OCI-LY7 (cell line): ENCODE measurements at regions of chr18 and their contacts with region 1.

Region 1: DNA sequence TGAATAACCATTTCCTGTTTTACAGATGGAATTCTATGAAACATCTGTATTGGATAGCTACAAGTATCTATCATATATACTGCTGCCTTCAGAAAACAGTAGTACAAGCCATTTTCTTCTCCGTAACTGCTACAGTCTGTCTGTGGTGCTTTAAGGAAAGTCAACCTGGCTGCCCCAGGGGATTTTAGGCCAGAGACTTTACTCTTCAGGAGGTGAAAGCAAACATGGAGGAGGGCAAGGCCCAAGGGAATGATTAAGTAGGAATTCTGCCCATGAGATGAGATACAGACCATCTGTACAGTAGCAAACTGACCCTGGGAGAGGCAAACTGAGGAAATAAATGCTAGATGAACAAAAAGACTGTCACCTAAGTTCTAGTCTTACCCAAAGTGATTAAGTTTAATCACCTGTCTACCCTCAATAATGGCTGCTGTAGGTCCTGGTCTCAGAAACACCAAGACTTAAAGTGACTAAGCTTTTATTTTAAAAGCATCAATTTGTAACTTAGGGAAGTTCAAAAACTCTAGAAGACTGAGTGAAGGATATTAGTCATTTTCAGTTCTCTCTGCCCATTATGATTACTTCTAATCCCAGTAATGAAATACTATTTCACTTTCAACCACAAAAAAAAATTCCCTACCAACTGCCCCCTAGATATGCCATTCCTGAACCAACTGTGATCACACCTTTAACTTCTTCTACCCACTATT is 14.8 kb downstream of the MBD2 start:
- DNase-seq: peak; percentile 32
- H3K4me3 ChIP-seq: peak overlapping the region; percentile 63
- H3K27ac ChIP-seq: peak overlapping the region; percentile 98
- H3K4me1 ChIP-seq: peaks cover 92% of the 10 kb centered on the region
- CTCF ChIP-seq: no peak

Region 2: DNA sequence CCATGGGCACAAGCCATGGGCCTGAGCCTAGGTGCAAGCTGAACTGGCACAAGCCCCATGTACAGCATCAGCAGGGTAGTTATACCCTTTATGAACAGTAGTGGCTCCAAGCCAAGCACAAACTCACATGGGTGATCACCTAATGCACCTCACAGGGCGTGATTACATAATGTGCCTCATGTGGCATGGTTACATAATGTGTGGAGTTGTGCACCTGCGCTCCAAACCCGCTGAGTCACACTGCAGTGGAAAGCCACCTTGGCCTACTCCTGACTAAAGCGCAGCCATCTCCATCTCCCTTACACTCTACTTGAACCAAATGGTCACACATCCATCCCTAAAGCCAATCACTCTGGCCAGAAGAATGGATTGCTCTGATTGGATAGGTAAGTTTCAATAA is 264.9 kb before region 1 on chr18:
- CTCF ChIA-PET with region 1: no interaction called
- POLR2A ChIA-PET with region 1: no interaction called
- intact Hi-C with region 1: no loop called
- DNase-seq: no peak
- H3K4me3 ChIP-seq: no peak overlapping the region
- H3K27ac ChIP-seq: no peak overlapping the region
- H3K4me1 ChIP-seq: no peaks in the 10 kb centered on the region
- CTCF ChIP-seq: no peak

Region 3: DNA sequence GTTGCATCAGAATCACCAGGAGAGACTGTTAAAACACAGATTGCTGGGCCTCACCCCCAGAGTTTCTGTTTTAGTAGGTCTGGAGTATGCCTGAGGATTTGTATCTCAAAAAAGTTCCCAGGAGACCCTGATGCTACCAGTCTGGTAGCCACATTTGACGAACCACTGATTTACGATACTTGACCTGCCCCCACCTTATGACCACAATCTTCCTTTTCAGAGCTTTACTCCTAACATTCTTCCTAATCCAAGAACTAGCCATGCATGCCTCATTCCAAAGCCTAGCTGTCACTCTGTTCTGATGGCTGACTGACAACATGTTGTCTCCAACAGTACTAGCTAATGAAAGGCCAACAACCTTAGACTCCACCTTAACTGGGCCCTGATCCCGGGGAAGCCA is 176.6 kb before region 1 on chr18:
- CTCF ChIA-PET with region 1: no interaction called
- POLR2A ChIA-PET with region 1: no interaction called
- intact Hi-C with region 1: no loop called
- DNase-seq: no peak
- H3K4me3 ChIP-seq: no peak overlapping the region
- H3K27ac ChIP-seq: no peak overlapping the region
- H3K4me1 ChIP-seq: no peaks in the 10 kb centered on the region
- CTCF ChIP-seq: no peak

Region 4: DNA sequence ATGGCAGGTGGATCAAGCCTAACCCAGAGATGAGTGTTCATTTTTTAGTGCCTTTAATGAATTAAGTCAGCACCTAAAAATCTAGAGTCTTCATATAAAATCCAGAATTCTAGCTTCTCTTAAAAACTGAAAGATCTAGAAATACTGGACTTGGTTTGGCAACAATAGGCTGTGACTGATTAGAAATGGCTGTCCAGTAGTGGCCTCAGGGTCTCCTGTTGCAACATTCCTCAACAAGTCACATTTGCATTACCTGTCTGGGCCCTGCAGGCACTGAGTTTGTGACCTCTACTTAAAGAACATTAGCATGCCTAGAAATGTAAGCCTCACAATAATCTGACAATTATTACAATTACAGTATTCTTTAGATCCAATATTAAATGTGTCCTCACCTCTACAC is 18.3 kb before region 1 on chr18:
- CTCF ChIA-PET with region 1: no interaction called
- POLR2A ChIA-PET with region 1: interaction called, 11 read pairs
- intact Hi-C with region 1: no loop called
- DNase-seq: no peak
- H3K4me3 ChIP-seq: no peak overlapping the region
- H3K27ac ChIP-seq: no peak overlapping the region
- H3K4me1 ChIP-seq: peaks cover 11% of the 10 kb centered on the region
- CTCF ChIP-seq: no peak

Region 5: GRCh38 chr18:54303408-54303807 is 93.8 kb after region 1 on chr18:
- CTCF ChIA-PET with region 1: no interaction called
- POLR2A ChIA-PET with region 1: no interaction called
- intact Hi-C with region 1: no loop called
- DNase-seq: no peak
- H3K4me3 ChIP-seq: no peak overlapping the region
- H3K27ac ChIP-seq: no peak overlapping the region
- H3K4me1 ChIP-seq: no peaks in the 10 kb centered on the region
- CTCF ChIP-seq: no peak